ENCODE measurements at regions of chr4 and their contacts with region 1.

Region 1: DNA sequence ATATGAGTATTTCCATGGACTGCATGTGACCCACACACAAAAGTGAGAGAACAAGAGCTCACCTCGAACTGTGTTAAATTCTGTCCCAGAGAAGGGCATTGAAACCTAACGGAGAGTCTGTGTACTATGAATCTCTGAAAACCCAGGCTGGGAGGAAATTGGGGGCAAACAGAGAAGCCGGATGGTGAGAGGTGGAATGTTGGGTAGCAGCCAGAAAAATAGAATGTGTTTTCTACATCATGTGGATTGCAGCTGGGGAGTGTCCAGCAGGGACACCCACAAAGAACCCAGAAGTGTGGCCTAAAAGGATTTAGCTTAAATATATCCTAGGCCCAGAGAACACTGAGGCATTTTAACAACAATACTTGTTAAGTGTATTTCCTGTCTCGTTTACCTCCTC is 38.6 kb downstream of the MND1 start:
- DNase-seq: no peak
- ATAC-seq: no peak
- H3K4me3 ChIP-seq: no peak overlapping the region
- H3K27ac ChIP-seq: no peak overlapping the region
- H3K4me1 ChIP-seq: 0 out of 2 replicates have a peak, but pooled peaks cover 3% of the 10 kb centered on the region
- H3K27me3 ChIP-seq: no peaks in the 10 kb centered on the region
- CTCF ChIP-seq: no peak
- EP300 ChIP-seq: no peak
- POLR2A ChIP-seq: no peak
- RAD21 ChIP-seq: no peak

Region 2: DNA sequence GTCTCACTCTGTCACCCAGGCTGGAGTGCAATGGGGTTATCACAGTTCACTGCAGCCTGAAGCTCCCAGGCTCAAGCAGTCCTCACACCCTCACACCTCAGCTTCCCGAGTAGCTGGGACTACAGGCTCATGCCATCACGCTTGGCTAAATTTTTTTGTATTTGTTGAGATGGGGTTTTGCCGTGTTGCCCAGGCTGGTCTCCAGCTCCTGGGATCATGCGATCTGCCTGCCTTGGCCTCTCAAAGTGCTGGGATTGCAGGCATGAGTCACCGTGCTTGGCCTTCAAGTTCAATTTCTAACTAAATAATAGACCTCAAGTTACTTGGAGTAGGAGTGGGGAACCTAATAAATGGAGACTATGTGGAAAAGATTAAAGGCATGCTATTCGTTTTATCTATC is 10.3 kb after region 1 on chr4:
- CTCF ChIA-PET with region 1: interaction called, 3 read pairs
- POLR2A ChIA-PET with region 1: interaction called, 10 read pairs
- RAD21 ChIA-PET with region 1: no interaction called
- SMC1A ChIA-PET with region 1: interaction called, 3 read pairs
- in situ Hi-C with region 1: no loop called
- intact Hi-C with region 1: no loop called
- DNase-seq: no peak
- ATAC-seq: no peak
- H3K4me3 ChIP-seq: no peak overlapping the region
- H3K27ac ChIP-seq: no peak overlapping the region
- H3K4me1 ChIP-seq: no peaks in the 10 kb centered on the region
- H3K27me3 ChIP-seq: no peaks in the 10 kb centered on the region
- CTCF ChIP-seq: no peak
- EP300 ChIP-seq: no peak
- POLR2A ChIP-seq: no peak
- RAD21 ChIP-seq: no peak

Measured in GM12878 (cell line).